ENCODE measurements at regions of chr14 and their contacts with region 1.

Region 1: DNA sequence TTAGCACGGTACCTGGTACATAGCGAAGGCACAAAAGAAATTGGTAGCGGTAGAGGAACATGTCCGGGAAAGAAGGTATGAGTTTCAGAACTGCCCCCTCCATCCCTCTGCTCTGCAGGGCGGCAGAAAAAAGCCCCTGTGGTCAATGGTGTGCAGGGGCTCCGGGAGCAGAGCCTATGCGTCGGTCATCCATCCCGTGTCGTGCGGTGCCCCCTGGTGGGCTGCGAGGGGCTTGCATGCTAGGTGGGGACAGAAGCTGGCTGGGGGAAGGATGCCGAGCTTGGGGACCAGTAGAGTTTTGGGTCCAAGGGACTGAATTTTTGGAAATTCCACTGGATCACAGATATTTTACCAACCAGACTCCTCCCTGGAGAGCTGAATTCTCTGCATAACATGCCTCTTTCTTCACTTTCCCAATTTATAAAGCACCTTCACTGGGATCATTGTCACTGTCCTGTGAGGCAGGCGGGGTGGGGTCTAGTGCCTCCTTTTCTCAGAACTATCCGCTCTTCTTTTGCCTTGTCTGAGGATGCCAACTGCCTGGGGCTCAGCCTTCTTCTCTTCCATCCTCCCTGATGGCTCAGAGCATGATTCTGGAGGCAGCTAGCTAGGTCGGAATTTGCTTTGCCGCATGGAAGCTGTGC is 148.7 kb downstream of the SMOC1 start:
- DNase-seq: peak; percentile 70 to 87 (median 78)
- H3K4me3 ChIP-seq: no peak overlapping the region
- H3K27ac ChIP-seq: no peak overlapping the region
- H3K27me3 ChIP-seq: peaks cover 0 to 10% (median 0%) of the 10 kb centered on the region in 45 donors
- CTCF ChIP-seq: peak; percentile 60 to 99 (median 96)

Region 2: GRCh38 chr14:69879175-69880043 is 148.5 kb before region 1 on chr14 and contains the start of gene SMOC1:
- intact Hi-C with region 1: loop called (anchors 1 to 2 kb)
- DNase-seq: peak; percentile 50 to 82 (median 68)
- H3K4me3 ChIP-seq: peak within 1 kb of the TSS; percentile 38 to 79 (median 62)
- H3K27ac ChIP-seq: peak within 1 kb of the TSS in 12 of 59 donors; percentile 11 to 64 (median 40)
- H3K27me3 ChIP-seq: peaks cover 0 to 30% (median 14%) of the 10 kb centered on the region in 45 donors
- CTCF ChIP-seq: peak in 8 of 56 donors; percentile 7 to 37 (median 14)
- total RNA-seq, gene SMOC1: 7.9 to 85.1 (median 34.1) TPM

Region 3: DNA sequence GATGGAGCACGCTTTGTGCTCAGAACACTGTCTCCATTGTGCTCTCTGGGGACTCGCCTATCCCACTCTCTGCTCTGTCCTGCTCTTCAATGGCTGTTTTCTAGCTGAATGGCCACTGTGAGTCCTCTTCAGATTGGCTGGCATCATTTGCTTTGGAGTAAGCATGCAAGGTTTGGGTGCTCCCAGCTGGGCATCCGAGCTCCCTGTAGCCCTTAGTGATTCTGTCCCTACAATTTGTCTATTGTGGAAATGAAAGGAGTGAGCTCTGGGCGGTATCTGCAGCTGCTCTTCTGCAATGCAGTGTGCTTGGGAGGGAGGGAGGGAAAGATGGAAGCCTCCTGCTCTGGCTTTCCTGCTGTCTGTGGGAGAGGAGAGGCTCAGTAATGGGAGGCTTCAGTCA is 63.9 kb before region 1 on chr14:
- intact Hi-C with region 1: loop called in 1 of 2 experiments (anchors 5 kb)
- DNase-seq: peak in 9 of 10 donors; percentile 36 to 88 (median 77)
- H3K4me3 ChIP-seq: peak overlapping the region in 1 of 59 donors; percentile 1
- H3K27ac ChIP-seq: peak overlapping the region in 52 of 59 donors; percentile 2 to 89 (median 76)
- H3K27me3 ChIP-seq: no peaks in the 10 kb centered on the region
- CTCF ChIP-seq: peak in 6 of 56 donors; percentile 8 to 37 (median 16)

Region 4: DNA sequence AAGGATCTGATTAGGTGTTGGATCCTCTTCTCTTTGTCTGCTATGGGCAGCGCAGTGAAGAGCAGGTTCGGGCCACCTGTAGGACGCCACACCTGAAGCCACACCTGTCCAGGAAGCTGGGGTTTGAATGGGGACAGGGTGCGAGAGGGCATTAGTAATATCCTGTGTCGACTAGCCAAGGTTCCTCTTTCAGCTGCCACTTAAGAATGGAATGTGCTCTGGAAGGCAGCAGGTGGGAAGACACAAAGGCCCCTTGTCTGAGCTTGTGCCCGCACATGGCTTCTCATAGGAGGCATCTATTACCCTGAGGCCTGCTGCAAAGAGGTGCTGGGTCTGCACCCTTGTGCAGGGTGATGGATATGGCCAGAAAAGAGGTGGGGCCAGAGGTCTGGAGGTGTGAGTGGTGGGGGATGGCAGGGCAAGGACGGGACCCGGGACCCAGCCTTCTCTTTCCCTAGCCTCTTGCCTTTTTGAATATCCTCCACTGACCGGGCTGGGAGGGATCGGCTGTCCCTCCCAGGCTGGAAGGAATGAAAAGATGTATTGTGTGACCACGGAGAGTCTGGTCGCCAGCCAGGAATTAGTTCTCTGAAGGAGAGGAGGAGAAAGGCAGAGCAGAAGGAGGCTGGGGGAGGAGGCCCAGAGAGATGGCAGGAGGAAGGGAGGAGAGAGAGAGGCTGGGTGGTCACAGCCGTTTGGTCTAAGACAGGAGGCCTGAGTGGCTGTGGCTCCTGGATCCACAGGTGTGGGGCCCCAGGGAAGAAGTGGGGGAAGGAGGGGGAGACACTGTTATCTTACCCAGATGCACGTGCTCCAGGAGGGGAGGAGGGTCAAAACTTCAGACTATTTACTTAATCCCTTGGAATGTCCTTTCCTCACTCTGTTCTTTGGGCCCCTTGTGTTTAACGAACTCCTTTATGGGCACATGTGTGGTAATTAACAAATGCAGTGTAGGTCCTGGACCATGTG is 47.2 kb before region 1 on chr14:
- intact Hi-C with region 1: loop called in 1 of 2 experiments (anchors 5 kb)
- DNase-seq: peak in 7 of 10 donors; percentile 50 to 79 (median 64)
- H3K4me3 ChIP-seq: peak overlapping the region in 8 of 59 donors; percentile 1 to 35 (median 8)
- H3K27ac ChIP-seq: peak overlapping the region in 53 of 59 donors; percentile 10 to 90 (median 69)
- H3K27me3 ChIP-seq: peaks cover 0 to 4% (median 0%) of the 10 kb centered on the region in 45 donors
- CTCF ChIP-seq: no peak

Measured in dorsolateral prefrontal cortex (tissue), 120 donors.